GM10248 (cell line): ENCODE measurements at regions of chr16 and their contacts with region 1.

Region 1: GRCh38 chr16:24253192-24253591 is 2.9 kb upstream of the CACNG3 start:
- DNase-seq: peak; percentile 71
- CTCF ChIP-seq: peak; percentile 79

Region 2: DNA sequence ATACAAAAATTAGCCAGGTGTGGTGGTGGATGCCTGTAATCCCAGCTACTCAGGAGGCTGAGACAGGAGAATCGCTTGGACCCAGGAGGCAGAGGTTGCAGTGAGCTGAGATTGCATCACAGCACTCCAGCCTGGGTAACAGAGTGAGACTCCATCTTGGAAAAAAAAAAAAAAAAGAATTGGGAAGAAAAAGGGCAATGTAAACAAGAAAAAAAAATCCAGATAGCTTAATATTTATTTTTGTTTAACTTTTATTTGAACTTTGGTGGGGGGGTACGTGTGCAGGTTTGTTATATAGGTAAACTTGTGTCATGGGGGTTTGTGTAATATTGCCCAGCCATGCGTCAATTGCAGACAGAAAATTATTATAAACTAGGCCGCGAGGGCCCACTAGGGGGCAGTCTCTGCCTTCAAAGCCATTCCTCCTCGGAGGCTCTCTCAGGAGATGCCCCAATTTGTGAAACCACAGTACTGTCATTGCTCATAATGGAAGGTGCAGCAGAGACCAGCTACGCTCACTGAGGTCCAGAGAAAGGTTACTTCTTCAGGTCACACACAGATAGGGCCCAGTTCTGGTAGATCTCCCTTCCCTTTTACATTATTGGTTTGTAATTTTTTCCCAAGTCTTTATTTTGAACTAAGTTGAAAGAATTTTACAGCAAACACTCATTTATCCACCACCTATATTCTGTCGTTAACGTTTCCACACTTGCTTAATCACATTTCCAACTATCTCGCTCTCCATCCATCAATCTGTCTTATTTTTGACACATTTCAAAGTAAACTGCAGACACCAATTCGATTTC is 211.2 kb before region 1 on chr16:
- CTCF ChIA-PET with region 1: interaction called, 24 read pairs
- POLR2A ChIA-PET with region 1: no interaction called
- DNase-seq: peak; percentile 82
- CTCF ChIP-seq: peak; percentile 65

Region 3: GRCh38 chr16:24221219-24221618 is 32.0 kb before region 1 on chr16:
- CTCF ChIA-PET with region 1: interaction called, 15 read pairs
- POLR2A ChIA-PET with region 1: no interaction called
- DNase-seq: no peak
- CTCF ChIP-seq: no peak

Region 4: DNA sequence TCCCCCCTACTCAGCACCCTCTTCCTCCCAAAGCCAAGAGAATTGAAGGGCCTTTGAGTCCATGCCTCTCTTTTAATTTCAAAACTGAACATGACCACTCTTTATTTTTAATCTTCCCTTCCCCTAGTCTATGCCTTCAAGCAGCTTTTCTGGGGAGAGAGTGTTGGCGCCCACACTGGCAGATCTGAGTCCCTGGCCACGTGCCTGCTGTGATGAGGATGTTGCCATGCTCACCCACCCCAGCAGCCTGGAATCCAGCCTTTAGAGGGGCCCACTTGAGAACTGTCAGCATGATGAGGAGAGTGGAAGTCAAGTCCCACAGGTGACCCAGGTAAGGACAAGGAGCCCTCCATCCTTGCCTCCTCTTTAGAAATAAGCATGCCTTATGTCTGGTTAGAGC is 17.4 kb before region 1 on chr16:
- CTCF ChIA-PET with region 1: interaction called, 12 read pairs
- POLR2A ChIA-PET with region 1: no interaction called
- DNase-seq: no peak
- CTCF ChIP-seq: no peak